Ascending aorta (tissue), 2 donors: ENCODE measurements at regions of chr1 and their contacts with region 1.

Region 1: DNA sequence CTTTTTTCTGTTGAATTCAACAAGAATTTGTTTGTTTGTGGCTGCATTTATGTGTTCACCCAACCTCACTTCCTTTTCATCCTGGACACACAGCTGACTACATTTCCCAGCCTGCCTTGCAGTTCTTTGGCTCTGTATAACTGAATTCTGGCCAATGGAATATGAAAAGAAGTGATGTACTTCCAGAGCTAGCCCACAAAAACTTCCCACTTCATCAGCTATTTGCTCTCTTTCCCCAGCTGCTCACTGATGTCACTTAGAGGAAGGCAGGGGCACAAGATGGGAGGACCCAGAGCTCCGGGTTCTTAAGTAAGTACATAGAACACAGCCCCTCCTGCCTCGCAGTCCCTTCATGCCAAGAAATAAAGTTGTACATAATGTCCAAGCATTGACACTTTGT is 235.0 kb upstream of the FGGY start:
- DNase-seq: peak; percentile 26 to 93
- H3K4me3 ChIP-seq: peak overlapping the region; percentile 28 to 55
- H3K27ac ChIP-seq: peak overlapping the region; percentile 78 to 80
- H3K4me1 ChIP-seq: peaks cover 3 to 15% of the 10 kb centered on the region in 2 donors
- H3K27me3 ChIP-seq: no peaks in the 10 kb centered on the region
- CTCF ChIP-seq: no peak

Region 2: DNA sequence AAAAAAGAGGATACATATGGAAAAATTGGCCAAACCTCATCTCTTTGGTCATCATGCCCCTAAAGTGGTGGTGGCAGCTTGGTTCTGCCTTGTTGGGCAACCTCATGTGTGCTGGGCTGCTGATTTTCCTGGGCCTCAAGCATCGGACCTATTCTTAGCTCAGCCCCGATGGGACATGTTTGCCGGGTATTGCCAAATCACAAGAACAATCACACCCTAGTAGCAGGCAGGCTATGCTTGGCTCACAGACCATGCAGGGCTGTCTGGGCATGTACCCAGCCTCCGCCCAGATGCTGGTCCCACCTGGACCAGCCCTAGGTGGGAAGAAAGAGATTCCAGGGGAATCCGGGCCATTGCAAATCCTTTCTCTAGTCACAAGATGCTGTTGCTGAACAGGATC is 45.6 kb after region 1 on chr1:
- intact Hi-C with region 1: no loop called
- DNase-seq: peak; percentile 39 to 92
- H3K4me3 ChIP-seq: no peak overlapping the region
- H3K27ac ChIP-seq: peak overlapping the region; percentile 54 to 69
- H3K4me1 ChIP-seq: peaks cover 0 to 9% of the 10 kb centered on the region in 2 donors
- H3K27me3 ChIP-seq: no peaks in the 10 kb centered on the region
- CTCF ChIP-seq: no peak

Region 3: DNA sequence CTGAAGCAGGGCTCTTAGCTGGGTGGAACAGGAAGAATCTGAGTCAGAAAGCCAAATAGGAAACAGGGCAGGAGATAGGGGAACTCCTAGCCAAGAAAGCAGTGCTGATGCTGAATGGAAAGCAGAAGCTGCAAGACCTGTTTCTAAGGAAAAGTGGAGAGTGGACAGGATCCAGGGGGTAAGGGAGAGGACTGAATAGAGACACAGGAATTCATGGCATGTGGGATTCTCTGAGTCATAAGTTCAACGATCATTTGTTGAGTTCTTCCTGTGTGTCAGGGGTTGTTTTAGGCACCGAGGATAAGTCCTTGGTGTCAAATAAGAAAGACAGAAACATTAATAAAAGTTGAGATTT is 81.2 kb after region 1 on chr1:
- intact Hi-C with region 1: loop called (anchors 5 kb)
- DNase-seq: peak in 1 of 2 donors; percentile 72
- H3K4me3 ChIP-seq: no peak overlapping the region
- H3K27ac ChIP-seq: peak overlapping the region; percentile 15 to 46
- H3K4me1 ChIP-seq: peaks cover 0 to 13% of the 10 kb centered on the region in 2 donors
- H3K27me3 ChIP-seq: no peaks in the 10 kb centered on the region
- CTCF ChIP-seq: no peak